Activated CD4-positive, alpha-beta T cell treated with anti-CD3 and anti-CD28 coated beads, Interleukin-2, amount 10 ng/mL, durations not matched to agents 24 days and 14 days (primary cell): ENCODE measurements at regions of chr5 and their contacts with region 1.

Region 1: DNA sequence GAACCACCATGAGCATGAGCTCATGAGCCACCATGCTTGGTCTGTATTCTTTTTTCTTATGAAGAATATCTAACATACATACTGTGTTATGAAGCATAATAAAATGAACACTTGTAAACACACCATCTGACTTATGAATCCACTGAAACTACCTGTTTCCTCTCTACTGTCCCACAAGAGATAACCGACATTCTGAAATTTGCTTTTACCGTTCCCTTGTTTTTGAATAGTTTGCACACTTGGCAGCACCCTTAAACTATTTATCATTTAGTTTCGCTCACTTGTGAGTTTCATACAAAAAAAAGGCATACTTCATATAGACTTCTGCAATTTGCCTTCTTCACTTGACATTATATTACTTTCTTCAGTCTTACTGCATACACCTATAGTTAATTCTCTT is 8.9 kb downstream of the LARS1 start:
- DNase-seq: no peak
- H3K4me3 Mint-ChIP-seq: peak overlapping the region; percentile 17
- H3K27ac Mint-ChIP-seq: no peak overlapping the region
- H3K4me1 Mint-ChIP-seq: peaks cover 10% of the 10 kb centered on the region
- H3K27me3 Mint-ChIP-seq: no peaks in the 10 kb centered on the region

Region 2: DNA sequence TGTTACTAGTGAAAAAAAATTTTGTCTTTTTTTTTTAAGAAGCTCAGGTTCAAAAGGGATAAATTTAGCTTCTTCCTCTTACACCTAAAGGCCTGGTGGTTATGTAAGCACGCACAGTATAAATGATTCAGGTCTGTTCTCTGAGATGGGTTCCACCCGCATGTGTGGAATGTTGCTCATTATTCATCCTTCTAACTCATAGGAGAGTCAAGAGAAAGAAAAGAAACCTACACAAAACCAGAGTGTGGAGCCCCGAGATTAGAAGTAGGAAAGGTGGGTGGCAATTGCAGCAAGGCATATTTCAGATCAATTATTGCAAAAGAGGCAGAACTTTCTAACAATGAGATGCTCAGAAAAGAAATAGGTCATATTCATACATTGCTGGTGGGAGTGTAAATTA is 81.7 kb before region 1 on chr5:
- intact Hi-C with region 1: no loop called
- DNase-seq: no peak
- H3K4me3 Mint-ChIP-seq: no peak overlapping the region
- H3K27ac Mint-ChIP-seq: no peak overlapping the region
- H3K4me1 Mint-ChIP-seq: no peaks in the 10 kb centered on the region
- H3K27me3 Mint-ChIP-seq: no peaks in the 10 kb centered on the region

Region 3: DNA sequence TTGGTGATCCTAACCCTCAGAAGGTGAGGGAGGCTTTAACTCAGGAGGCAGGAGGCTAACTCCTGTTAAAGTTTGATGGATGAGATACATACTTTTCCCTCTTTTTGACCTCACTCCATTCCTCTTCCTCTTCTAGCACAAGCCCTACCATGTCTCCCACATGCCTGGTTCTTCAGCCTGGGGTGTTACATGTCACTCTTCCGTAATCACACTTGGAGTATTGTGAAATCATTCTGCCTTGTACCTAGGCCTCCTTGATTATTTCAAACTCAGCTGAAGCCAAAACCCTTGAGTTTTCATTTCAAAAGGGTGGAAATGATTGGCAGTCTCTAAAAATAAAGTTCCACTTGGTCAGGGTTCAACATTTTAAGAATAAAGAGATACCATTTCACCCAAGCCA is 70.0 kb before region 1 on chr5:
- intact Hi-C with region 1: no loop called
- DNase-seq: no peak
- H3K4me3 Mint-ChIP-seq: no peak overlapping the region
- H3K27ac Mint-ChIP-seq: no peak overlapping the region
- H3K4me1 Mint-ChIP-seq: no peaks in the 10 kb centered on the region
- H3K27me3 Mint-ChIP-seq: no peaks in the 10 kb centered on the region

Region 4: DNA sequence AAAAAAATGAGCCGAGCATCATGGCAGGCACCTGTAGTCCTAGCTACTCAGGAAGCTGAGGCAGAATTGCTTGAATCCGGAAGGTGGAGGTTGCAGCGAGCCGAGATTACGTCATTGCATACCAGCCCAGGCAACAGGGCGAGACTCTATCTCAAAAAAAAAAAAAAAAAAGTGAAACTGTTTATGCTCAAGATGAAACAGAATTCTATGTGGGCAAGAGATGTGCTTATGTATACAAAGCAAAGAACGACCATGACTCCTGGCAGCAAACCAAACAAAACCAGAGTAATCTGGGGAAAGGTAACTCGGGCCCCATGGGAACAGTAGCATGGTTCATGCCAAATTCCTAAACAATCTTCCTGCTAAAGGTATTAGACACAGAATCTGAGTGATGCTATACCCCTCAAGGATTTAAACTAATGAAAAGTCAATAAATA is 35.6 kb before region 1 on chr5:
- intact Hi-C with region 1: no loop called
- DNase-seq: no peak
- H3K4me3 Mint-ChIP-seq: no peak overlapping the region
- H3K27ac Mint-ChIP-seq: no peak overlapping the region
- H3K4me1 Mint-ChIP-seq: no peaks in the 10 kb centered on the region
- H3K27me3 Mint-ChIP-seq: no peaks in the 10 kb centered on the region

Region 5: DNA sequence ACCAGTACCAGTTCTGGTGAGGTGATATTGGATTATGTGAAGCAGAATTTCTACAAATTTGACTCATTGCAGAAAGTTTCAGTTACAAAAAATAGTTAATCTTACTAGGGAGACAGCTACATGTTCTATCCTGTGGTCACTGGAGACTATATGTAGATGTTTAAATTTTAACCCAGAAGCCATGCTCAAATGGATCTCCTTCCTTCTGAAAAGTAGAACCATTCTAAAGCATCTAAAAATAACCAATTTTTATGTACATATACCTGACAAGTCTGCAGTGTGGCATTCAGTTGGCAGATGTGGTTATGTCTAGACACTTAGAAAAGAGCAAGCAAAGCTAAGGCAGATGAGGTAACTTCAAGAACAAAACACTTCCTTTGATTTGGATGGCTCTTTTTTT is 99.5 kb after region 1 on chr5:
- intact Hi-C with region 1: loop called (anchors 10 kb)
- DNase-seq: no peak
- H3K4me3 Mint-ChIP-seq: no peak overlapping the region
- H3K27ac Mint-ChIP-seq: no peak overlapping the region
- H3K4me1 Mint-ChIP-seq: no peaks in the 10 kb centered on the region
- H3K27me3 Mint-ChIP-seq: no peaks in the 10 kb centered on the region